Dorsolateral prefrontal cortex (tissue), 120 donors: ENCODE measurements at regions of chr2 and their contacts with region 1.

Region 1: DNA sequence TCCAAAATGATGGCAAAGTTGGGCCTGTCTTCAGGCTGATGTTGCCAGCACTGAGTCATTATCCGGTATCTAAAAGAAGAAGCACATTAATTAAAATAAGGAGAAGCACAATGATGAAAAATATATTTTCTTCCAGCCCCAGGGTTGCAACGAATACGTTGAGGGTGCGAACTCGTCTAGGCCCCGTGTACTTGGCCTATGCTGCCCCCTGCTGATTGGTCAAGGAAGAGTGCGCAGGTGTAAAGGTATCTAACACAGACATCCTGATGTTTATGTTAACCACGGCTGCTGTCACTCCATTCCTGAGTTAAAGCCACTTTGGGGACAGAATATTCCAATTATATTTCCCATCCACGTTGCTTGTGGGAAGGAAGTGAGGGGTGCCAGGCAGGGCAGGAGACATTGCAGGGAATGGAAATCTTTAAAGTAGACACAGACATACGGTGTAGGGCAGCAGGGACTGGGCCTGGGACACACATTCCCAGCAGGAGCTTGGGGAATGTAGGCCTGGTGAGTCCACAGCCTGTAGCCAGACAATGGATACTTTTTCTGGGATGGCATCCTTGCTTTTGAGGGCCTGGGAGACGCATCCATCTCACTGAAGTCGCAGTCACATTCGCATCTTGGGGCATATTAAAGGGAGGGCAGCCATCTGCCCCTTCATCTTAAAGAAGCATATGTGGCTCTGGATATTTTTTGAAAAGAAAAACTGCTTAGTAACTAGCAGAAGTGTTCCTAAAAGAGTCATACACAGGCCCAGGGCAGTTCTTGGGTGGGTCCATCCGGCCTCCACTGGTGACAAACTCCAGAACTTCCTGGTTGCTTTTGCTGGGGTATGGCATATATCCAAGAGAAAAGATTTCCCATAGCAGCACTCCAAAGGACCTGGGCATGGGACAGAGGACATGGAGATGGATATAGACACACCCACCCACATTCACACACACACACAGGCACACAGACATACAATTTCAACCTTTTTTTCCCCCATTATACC is 81.9 kb downstream of the CLIP4 start:
- DNase-seq: peak; percentile 30 to 80 (median 72)
- H3K4me3 ChIP-seq: no peak overlapping the region
- H3K27ac ChIP-seq: no peak overlapping the region
- H3K27me3 ChIP-seq: no peaks in the 10 kb centered on the region
- CTCF ChIP-seq: peak; percentile 51 to 97 (median 86)

Region 2: GRCh38 chr2:29063646-29064343 is 133.3 kb before region 1 on chr2:
- intact Hi-C with region 1: loop called in 1 of 2 experiments (anchors 5 kb)
- DNase-seq: peak in 6 of 10 donors; percentile 40 to 53 (median 47)
- H3K4me3 ChIP-seq: peak overlapping the region in 28 of 59 donors; percentile 4 to 49 (median 24)
- H3K27ac ChIP-seq: peak overlapping the region in 56 of 59 donors; percentile 18 to 98 (median 89)
- H3K27me3 ChIP-seq: no peaks in the 10 kb centered on the region
- CTCF ChIP-seq: no peak

Region 3: DNA sequence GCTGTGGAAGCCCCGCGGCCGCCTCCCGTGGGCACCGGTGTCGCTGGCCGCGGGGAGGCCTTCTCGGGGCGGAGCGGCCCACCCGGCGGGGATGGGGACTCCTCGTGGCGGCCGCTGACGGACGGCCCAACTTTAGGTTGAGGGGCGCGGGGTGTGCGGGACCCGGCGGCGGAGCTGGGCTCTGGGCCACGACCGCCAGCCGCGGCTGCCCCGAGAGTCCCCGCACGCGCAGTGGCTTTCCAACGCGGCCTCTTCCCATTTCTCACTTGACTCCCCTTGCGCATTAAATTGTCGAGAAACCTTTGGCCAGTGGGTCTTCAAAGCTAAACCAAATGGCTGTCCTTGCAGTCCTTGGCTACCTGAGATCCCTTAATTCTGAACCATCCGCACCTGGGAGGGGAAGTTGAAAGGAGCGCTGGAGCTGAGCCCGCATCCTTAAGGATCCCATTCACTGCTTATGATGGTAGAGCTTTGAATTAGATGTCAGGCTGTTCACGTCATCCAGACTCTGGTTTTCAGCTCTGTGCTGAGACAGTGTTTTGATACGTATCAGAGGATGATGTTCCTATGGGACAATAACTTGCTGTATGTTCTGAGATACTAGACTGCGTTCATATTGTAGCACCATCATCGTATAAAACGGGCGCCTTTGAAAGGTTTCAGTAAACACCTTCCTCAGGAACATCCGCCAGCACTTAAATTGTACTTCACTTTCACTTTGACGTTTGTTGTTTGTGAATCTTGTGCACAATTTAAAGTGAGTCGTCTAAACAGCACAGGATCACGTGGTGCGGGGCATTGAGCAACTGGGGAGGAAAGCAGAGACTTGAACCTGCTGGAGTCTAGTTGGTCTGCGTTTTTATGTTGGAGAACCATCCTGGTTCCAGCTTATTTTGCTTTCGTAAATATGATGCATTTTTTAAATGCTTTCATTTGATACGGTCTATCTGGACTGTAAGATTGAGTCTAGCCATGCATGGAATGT is 81.0 kb before region 1 on chr2:
- intact Hi-C with region 1: loop called in 1 of 2 experiments (anchors 5 kb)
- DNase-seq: peak; percentile 44 to 77 (median 67)
- H3K4me3 ChIP-seq: peak overlapping the region; percentile 43 to 89 (median 78)
- H3K27ac ChIP-seq: peak overlapping the region; percentile 62 to 99 (median 96)
- H3K27me3 ChIP-seq: no peaks in the 10 kb centered on the region
- CTCF ChIP-seq: peak in 5 of 56 donors; percentile 6 to 18 (median 7)

Region 4: DNA sequence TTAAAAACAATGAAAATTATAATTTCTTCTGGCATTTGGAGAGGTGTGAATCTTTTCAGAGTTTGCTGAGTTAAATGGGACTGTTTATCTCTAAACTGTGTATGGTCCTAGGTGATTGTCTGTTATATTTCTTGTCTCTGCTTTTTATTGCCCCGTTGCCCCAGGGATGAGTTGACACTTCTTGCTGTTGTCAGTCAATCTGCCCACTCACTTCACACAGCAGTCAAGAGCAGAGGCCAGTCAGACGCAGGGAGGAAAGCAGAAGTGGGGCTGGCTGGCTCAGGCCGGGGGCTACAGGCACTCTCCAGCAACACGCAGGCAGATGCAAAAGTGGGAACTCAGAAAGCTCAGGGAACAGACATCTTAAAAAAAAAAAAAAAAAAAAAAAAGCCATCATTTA is 283.3 kb after region 1 on chr2:
- intact Hi-C with region 1: no loop called
- DNase-seq: no peak
- H3K4me3 ChIP-seq: no peak overlapping the region
- H3K27ac ChIP-seq: no peak overlapping the region
- H3K27me3 ChIP-seq: peaks cover 0 to 14% (median 0%) of the 10 kb centered on the region in 45 donors
- CTCF ChIP-seq: no peak